GM12878 (cell line): ENCODE measurements at regions of chr22 and their contacts with region 1.

Region 1: DNA sequence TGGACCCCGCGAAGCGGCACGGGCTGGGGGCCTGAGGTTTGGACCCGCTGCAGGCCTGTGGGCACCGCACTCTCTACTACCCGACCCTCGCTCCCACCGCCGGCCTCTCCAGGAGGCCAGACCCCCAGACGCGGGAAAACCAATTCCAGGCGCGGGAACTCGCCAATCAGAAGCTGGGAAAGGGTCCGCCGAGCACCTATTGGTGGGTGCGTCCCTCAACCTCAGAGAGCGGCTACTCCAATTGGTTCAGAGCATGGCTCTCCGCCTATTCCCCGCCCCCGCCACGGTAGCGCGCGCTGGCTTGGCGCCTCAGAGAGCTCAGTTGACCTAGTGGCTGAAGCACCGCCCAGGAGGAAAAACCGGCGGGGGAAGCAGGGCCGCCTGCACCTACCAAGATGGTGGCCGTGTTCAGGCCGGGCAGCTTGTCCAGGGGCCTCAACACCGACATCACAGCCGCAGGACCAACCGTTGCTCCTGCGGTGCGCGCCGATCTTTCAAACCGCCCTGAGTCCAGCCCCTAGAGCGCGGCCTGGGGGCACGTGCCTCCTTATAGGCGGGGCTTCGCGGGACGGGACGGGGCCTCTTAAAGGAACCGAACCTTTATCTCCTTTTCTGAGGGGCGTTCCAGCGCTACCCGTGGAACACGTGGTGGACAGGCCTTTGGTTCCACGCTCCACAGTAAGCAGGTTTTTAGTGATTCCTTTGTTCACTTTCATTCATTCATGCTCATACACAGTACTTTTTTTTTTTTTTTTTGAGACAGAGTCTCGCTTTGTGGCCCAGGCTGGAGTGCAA is at the start of gene CENPM:
- DNase-seq: peak; percentile 80
- ATAC-seq: peak; percentile 88
- H3K4me3 ChIP-seq: peak within 1 kb of the TSS; percentile 78
- H3K27ac ChIP-seq: peak within 1 kb of the TSS; percentile 94
- H3K4me1 ChIP-seq: peaks cover 59% of the 10 kb centered on the region
- H3K27me3 ChIP-seq: no peaks in the 10 kb centered on the region
- CTCF ChIP-seq: no peak
- EP300 ChIP-seq: no peak
- POLR2A ChIP-seq: peak; percentile 83
- RAD21 ChIP-seq: no peak
- polyA plus RNA-seq, gene CENPM: 36.7 to 62.3 TPM

Region 2: DNA sequence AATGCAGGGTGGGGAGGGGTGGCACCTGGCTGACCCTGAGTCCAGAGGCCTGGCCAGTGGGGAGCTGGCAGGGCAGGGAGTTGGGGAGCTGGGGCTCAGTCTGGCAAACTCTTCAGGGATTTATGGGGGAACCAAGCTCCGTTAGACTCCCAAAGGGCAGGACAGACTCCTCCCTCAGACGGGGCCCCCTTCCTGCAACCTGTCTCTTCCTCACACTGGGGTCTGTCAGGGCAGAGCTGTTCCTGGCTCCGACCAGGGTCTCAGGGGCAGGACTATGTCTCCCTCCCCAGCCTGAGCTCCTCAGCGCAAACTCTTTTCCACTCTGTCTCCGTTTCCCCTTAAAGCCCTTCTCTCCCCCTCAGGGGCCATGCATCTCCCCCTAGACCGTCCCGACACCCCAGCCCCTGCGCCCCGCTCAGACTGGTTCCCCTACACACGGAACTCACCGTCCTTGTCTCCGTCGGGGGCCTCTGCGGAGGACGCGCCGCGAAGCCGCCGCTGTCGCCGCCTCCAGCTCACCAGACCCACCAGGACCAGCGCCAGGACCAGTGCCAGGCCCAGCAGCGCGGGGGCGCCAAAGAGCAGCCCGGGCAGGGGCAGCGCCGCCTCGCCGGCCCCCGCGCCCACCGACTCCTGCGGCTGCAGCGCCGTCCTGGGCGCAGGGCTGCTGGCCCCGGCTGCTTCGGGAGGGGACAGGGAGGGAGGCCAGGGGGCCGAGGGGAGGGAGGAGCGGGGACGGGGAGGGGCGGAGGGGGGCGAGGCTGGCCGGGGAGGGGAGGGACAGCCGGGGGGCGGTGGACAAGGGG is 21.0 kb before region 1 on chr22:
- CTCF ChIA-PET with region 1: interaction called, 234 read pairs
- POLR2A ChIA-PET with region 1: interaction called, 599 read pairs
- RAD21 ChIA-PET with region 1: interaction called, 408 read pairs
- SMC1A ChIA-PET with region 1: interaction called, 321 read pairs
- in situ Hi-C with region 1: no loop called
- intact Hi-C with region 1: no loop called
- DNase-seq: no peak
- ATAC-seq: peak; percentile 59
- H3K4me3 ChIP-seq: peak overlapping the region; percentile 97
- H3K27ac ChIP-seq: peak overlapping the region; percentile 93
- H3K4me1 ChIP-seq: peaks cover 53% of the 10 kb centered on the region
- H3K27me3 ChIP-seq: no peaks in the 10 kb centered on the region
- CTCF ChIP-seq: peak; percentile 78 to 87 (median 79)
- EP300 ChIP-seq: no peak
- POLR2A ChIP-seq: peak; percentile 54; the same call in 1 of the 2 replicates
- RAD21 ChIP-seq: peak; percentile 50

Region 3: GRCh38 chr22:41935015-41935351 is 11.8 kb before region 1 on chr22:
- CTCF ChIA-PET with region 1: interaction called, 27 read pairs
- POLR2A ChIA-PET with region 1: interaction called, 145 read pairs
- RAD21 ChIA-PET with region 1: interaction called, 408 read pairs
- SMC1A ChIA-PET with region 1: interaction called, 321 read pairs
- in situ Hi-C with region 1: no loop called
- intact Hi-C with region 1: no loop called
- DNase-seq: no peak
- ATAC-seq: no peak
- H3K4me3 ChIP-seq: no peak overlapping the region
- H3K27ac ChIP-seq: peak overlapping the region; percentile 94; the same call in 1 of the 2 replicates
- H3K4me1 ChIP-seq: peaks cover 80% of the 10 kb centered on the region
- H3K27me3 ChIP-seq: no peaks in the 10 kb centered on the region
- CTCF ChIP-seq: no peak
- EP300 ChIP-seq: no peak
- POLR2A ChIP-seq: no peak
- RAD21 ChIP-seq: no peak